Activated naive CD4-positive, alpha-beta T cell treated with anti-CD3 and anti-CD28 coated beads, Interleukin-2, amount 10 ng/mL, durations not matched to agents 7 days and 5 days (primary cell): ENCODE measurements at regions of chr12 and their contacts with region 1.

Region 1: GRCh38 chr12:67355578-67356379 is 86.6 kb downstream of the CAND1 start:
- DNase-seq: no peak
- H3K4me3 Mint-ChIP-seq: no peak overlapping the region
- H3K27ac Mint-ChIP-seq: no peak overlapping the region
- H3K4me1 Mint-ChIP-seq: peaks cover 19% of the 10 kb centered on the region
- H3K27me3 Mint-ChIP-seq: peaks cover 5% of the 10 kb centered on the region

Region 2: GRCh38 chr12:67441736-67442346 is 86.1 kb after region 1 on chr12:
- CTCF ChIA-PET with region 1: interaction called, 21 read pairs
- DNase-seq: peak; percentile 90
- H3K4me3 Mint-ChIP-seq: no peak overlapping the region
- H3K27ac Mint-ChIP-seq: peak overlapping the region; percentile 39
- H3K4me1 Mint-ChIP-seq: peaks cover 19% of the 10 kb centered on the region
- H3K27me3 Mint-ChIP-seq: peaks cover 4% of the 10 kb centered on the region

Region 3: GRCh38 chr12:67943226-67943892 is 587.6 kb after region 1 on chr12:
- CTCF ChIA-PET with region 1: interaction called, 72 read pairs
- DNase-seq: peak; percentile 78
- H3K4me3 Mint-ChIP-seq: no peak overlapping the region
- H3K27ac Mint-ChIP-seq: no peak overlapping the region
- H3K4me1 Mint-ChIP-seq: no peaks in the 10 kb centered on the region
- H3K27me3 Mint-ChIP-seq: peaks cover 3% of the 10 kb centered on the region